HepG2 (cell line): ENCODE measurements at regions of chr10 and their contacts with region 1.

Region 1: GRCh38 chr10:23702977-23703414 is 264.1 kb downstream of the OTUD1 start:
- DNase-seq: peak; percentile 58
- ATAC-seq: peak; percentile 98
- H3K4me3 ChIP-seq: no peak overlapping the region
- H3K27ac ChIP-seq: no peak overlapping the region
- H3K4me1 ChIP-seq: no peaks in the 10 kb centered on the region
- H3K27me3 ChIP-seq: no peaks in the 10 kb centered on the region
- CTCF ChIP-seq: peak; percentile 82
- EP300 ChIP-seq: no peak
- POLR2A ChIP-seq: no peak
- RAD21 ChIP-seq: 0 out of 2 replicates have a peak, but pooled peaks have one; percentile 53

Region 2: DNA sequence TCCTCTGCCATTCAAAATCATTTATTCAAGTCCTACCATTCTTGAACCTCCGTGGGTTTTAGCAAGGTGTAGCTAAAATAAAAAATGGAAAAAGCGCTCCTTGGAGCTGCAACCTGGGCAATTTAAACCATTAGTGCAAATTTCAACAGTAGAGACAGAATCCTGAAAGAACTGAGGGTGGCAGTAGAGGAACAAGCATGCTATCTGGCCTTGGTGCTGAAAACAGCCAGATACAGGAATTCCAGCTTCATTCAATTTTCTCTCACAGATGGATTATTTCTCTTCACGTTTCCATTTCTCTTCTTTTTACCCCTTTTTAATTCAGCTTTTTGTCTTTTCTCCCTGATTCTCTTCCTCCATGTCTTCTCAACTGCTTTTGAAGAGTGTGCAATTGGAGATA is 186.5 kb before region 1 on chr10:
- CTCF ChIA-PET with region 1: no interaction called
- POLR2A ChIA-PET with region 1: no interaction called
- in situ Hi-C with region 1: no loop called
- intact Hi-C with region 1: loop called (anchors 1 kb)
- DNase-seq: peak; percentile 17
- ATAC-seq: peak; percentile 82
- H3K4me3 ChIP-seq: no peak overlapping the region
- H3K27ac ChIP-seq: no peak overlapping the region
- H3K4me1 ChIP-seq: peaks cover 20% of the 10 kb centered on the region
- H3K27me3 ChIP-seq: no peaks in the 10 kb centered on the region; a peak in 1 of 5 replicates
- CTCF ChIP-seq: peak; percentile 54
- EP300 ChIP-seq: no peak
- POLR2A ChIP-seq: no peak
- RAD21 ChIP-seq: no peak